ENCODE measurements at regions of chr9 and their contacts with region 1.

Region 1: DNA sequence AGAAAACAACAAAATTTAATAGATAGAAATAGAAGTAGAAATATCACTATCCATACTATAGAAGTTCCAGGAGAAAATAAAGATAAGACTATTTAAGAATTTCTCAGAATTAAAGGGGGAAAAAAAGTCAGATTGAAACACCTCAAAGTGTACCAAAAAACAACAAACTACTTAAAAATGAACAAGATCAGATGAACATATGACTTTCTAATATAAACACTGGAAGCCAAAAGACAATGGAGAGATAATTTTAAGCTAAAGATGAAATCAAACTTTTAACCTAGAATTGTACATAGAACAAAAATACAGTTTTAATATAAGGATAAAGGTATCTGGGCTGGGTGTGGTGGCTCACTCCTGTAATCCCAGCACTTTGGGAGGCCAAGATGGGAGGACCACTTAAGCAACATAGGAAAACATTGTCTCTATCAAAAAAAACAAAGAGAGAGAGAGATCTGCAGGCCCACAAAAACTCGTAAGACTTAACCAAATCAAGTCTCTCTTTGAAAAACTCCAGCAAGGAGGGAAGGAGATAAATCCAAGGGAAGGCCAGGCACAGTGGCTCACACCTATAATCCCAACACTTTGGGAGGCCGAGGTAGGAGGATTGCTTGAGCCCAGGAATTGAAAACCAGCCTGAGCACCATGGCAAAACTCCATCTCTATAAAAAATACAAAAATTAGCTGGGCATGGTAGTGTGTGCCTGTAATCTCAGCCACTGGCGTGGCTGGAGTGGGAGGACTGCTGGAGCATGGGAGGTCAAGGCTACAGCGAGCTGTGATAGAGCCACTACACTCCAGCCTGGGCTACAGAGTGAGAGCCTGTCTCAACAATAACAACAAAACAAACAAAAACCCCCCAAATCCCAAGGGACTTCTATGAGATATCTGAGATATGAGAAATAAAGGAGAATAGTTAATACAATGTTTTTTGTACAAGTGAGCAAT is 32.4 kb downstream of the ABHD17B start:
- DNase-seq: no peak
- ATAC-seq: no peak
- H3K4me3 ChIP-seq: no peak overlapping the region
- H3K4me3 Mint-ChIP-seq: no peak overlapping the region
- H3K27ac ChIP-seq: no peak overlapping the region
- H3K27ac Mint-ChIP-seq: no peak overlapping the region
- H3K4me1 ChIP-seq: no peaks in the 10 kb centered on the region
- H3K4me1 Mint-ChIP-seq: peaks cover 14% of the 10 kb centered on the region
- H3K27me3 ChIP-seq: no peaks in the 10 kb centered on the region
- H3K27me3 Mint-ChIP-seq: no peaks in the 10 kb centered on the region
- CTCF ChIP-seq: no peak

Region 2: DNA sequence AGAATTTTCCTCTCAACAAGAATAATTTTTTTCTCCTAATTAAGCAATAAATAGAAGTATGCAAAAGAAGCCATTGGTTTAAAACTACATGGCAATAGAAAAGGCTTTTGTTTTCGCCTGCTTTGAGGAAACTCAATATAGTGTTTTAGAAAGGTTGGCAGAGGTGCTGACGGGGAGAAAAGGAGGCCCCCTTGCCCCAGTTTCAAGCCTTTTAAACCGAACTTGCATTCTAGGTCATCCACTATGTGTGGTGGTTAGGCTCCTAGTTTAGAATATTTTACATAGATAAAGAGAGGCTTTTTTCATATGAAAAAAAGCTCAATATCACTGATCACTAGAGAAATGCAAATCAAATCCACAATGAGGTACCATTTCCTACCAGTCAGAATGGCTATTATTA is 76.8 kb before region 1 on chr9:
- CTCF ChIA-PET with region 1: no interaction called
- POLR2A ChIA-PET with region 1: no interaction called
- intact Hi-C with region 1: no loop called
- DNase-seq: no peak
- ATAC-seq: no peak
- H3K4me3 ChIP-seq: no peak overlapping the region
- H3K4me3 Mint-ChIP-seq: no peak overlapping the region
- H3K27ac ChIP-seq: no peak overlapping the region
- H3K27ac Mint-ChIP-seq: no peak overlapping the region
- H3K4me1 ChIP-seq: peaks cover 11% of the 10 kb centered on the region
- H3K4me1 Mint-ChIP-seq: peaks cover 17% of the 10 kb centered on the region
- H3K27me3 ChIP-seq: no peaks in the 10 kb centered on the region
- H3K27me3 Mint-ChIP-seq: no peaks in the 10 kb centered on the region
- CTCF ChIP-seq: no peak

Region 3: DNA sequence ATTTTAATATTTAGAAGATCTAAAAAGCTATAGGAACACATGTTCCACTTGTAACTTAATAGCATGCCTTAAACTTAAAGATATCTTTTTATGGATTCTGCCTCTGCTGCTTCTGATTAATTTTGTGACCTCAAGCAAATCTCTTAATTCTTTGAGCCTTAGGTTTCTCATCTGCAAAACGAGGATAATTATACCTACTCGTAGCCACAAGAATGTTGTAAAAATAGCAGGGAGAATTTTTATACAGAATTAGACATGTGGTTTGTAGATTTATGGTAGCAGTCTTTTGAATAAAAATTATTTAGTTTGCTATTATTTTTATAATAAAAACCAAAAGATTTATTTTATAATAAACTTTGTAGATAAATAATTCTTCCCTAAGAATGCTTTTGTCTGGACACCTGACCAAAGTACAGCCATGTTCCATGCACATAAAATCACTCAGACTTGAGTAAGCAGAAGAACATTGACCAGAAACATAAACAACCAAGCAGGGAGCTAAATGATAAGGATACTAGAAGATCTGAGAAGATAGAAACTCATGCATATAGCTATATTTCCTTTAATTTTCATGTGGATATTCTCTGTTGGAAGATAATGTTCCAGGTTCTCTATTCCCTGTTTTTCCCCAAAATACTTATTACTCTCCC is 51.3 kb after region 1 on chr9:
- CTCF ChIA-PET with region 1: no interaction called
- POLR2A ChIA-PET with region 1: no interaction called
- intact Hi-C with region 1: loop called in 1 of 2 experiments (anchors 10 kb)
- DNase-seq: no peak
- ATAC-seq: no peak
- H3K4me3 ChIP-seq: no peak overlapping the region
- H3K4me3 Mint-ChIP-seq: no peak overlapping the region
- H3K27ac ChIP-seq: no peak overlapping the region
- H3K27ac Mint-ChIP-seq: no peak overlapping the region
- H3K4me1 ChIP-seq: no peaks in the 10 kb centered on the region
- H3K4me1 Mint-ChIP-seq: peaks cover 20% of the 10 kb centered on the region
- H3K27me3 ChIP-seq: no peaks in the 10 kb centered on the region
- H3K27me3 Mint-ChIP-seq: no peaks in the 10 kb centered on the region
- CTCF ChIP-seq: no peak

Region 4: DNA sequence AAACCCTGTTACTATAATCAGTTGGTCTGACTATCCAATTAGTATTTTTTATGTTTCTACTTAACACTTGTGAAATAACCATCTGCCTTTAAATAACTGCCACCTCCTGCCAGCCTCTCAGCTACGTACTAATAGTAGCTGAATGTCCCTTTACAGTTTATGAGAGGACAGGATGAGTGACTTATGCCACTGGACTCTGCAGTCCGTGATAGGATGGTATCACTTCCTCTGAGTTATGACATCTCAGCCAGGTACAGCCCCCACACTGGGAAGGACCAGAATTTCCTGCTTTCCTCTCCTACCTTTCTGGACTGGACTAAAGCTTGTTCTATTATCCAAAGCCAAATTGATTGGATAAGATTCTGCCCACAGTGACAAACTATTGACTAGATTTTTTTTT is 383.5 kb after region 1 on chr9:
- CTCF ChIA-PET with region 1: no interaction called
- POLR2A ChIA-PET with region 1: no interaction called
- intact Hi-C with region 1: no loop called
- DNase-seq: no peak
- ATAC-seq: no peak
- H3K4me3 ChIP-seq: no peak overlapping the region
- H3K4me3 Mint-ChIP-seq: no peak overlapping the region
- H3K27ac ChIP-seq: no peak overlapping the region
- H3K27ac Mint-ChIP-seq: no peak overlapping the region
- H3K4me1 ChIP-seq: no peaks in the 10 kb centered on the region
- H3K4me1 Mint-ChIP-seq: no peaks in the 10 kb centered on the region
- H3K27me3 ChIP-seq: peaks cover 4 to 14% of the 10 kb centered on the region in 2 experiments
- H3K27me3 Mint-ChIP-seq: peaks cover 25% of the 10 kb centered on the region
- CTCF ChIP-seq: no peak

Measured in CD4-positive, alpha-beta T cell (primary cell).